Gastrocnemius medialis (tissue), 4 donors: ENCODE measurements at regions of chr9 and their contacts with region 1.

Region 1: DNA sequence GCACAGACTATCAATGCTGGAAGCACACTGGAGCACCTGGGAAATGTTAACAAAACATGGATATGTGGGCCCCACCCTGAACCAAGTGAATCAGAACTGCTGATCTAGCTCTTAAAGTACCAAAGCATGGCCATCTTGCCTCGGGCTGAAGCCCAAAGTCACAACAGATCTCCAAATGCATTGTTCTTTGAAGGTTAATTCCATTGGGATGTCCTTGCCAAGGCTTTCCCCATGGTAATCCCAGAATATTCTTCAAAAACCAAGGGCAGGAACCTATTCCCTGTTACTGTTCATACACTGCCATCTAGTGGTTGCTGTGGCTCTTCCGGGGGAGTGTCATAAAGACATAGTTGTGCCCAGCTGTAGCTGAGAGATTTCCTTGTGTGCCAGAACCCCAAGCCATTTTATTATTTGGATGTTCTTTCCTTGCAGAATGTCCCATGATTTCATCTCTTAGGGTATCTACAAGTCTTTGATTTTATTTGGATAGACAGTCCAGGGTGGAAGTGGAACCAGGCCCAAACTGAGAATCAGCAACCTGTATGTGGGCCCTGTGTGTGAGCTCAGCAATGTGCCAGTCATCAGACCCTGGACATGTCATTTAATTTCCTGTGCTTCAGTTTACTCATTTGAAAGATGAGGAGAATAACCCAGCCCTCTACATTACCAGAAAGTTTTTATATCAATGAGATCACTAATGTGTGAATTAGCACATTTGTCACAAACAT is 290.0 kb downstream of the ACTL7B start:
- DNase-seq: peak in 1 of 2 donors; percentile 42
- ATAC-seq: peak; percentile 87 to 93
- H3K4me3 ChIP-seq: no peak overlapping the region
- H3K27ac ChIP-seq: no peak overlapping the region
- H3K4me1 ChIP-seq: peaks cover 0 to 23% of the 10 kb centered on the region in 2 donors
- H3K27me3 ChIP-seq: no peaks in the 10 kb centered on the region
- CTCF ChIP-seq: peak; percentile 84 to 91 (median 87)
- POLR2A ChIP-seq: no peak

Region 2: DNA sequence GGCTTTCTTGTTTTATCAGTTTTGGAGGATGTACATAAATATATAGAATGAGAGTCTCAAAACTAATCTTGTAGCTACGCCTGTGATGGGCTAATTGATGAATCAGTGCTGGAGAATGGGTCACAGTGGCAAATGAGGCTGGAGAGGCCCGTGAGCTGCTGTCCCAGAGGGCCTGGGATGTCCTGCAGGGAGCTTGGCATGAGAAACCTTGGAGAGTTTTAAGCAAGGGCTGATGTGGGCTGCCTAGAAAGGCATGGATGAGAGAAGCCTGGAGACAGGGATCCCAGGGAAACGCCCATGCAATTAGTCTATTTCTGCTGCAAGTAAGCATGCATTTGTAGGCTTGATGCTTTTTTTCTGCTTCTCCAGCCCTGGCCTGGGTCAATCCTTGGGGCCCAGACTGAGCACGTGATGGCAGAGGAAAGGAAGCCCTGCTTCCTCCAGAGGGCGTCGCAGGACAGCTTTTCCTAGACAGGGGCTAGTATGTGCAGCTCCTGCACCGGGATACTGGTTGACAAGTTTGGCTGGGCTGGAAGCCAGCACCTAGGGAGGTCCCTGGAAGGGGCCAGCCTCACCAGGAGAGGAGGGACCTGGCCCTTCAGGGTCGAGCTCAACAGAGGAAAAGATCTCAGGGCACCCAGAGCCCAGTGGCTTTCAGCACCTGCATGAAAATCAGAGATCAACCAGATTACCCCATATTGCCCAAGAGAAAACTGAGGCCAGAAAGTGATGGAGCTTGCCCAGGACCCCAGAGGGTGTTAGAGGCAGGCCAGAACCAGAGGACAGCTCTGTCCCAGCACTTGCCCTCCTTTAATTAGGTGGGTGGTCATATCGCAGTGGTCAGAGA is 1143.6 kb before region 1 on chr9:
- in situ Hi-C with region 1: no loop called
- intact Hi-C with region 1: loop called (anchors 2 kb)
- DNase-seq: peak in 1 of 2 donors; percentile 54
- ATAC-seq: peak in 1 of 2 donors; percentile 47
- H3K4me3 ChIP-seq: no peak overlapping the region
- H3K27ac ChIP-seq: no peak overlapping the region
- H3K4me1 ChIP-seq: peaks cover 0 to 5% of the 10 kb centered on the region in 2 donors
- H3K27me3 ChIP-seq: no peaks in the 10 kb centered on the region
- CTCF ChIP-seq: peak; percentile 12 to 51 (median 43)
- POLR2A ChIP-seq: no peak

Region 3: GRCh38 chr9:107472581-107473340 is 1093.1 kb before region 1 on chr9:
- in situ Hi-C with region 1: loop called in 3 of 4 experiments (anchors 10 kb)
- intact Hi-C with region 1: no loop called
- DNase-seq: no peak
- ATAC-seq: no peak
- H3K4me3 ChIP-seq: no peak overlapping the region
- H3K27ac ChIP-seq: no peak overlapping the region
- H3K4me1 ChIP-seq: no peaks in the 10 kb centered on the region
- H3K27me3 ChIP-seq: no peaks in the 10 kb centered on the region
- CTCF ChIP-seq: no peak
- POLR2A ChIP-seq: no peak

Region 4: DNA sequence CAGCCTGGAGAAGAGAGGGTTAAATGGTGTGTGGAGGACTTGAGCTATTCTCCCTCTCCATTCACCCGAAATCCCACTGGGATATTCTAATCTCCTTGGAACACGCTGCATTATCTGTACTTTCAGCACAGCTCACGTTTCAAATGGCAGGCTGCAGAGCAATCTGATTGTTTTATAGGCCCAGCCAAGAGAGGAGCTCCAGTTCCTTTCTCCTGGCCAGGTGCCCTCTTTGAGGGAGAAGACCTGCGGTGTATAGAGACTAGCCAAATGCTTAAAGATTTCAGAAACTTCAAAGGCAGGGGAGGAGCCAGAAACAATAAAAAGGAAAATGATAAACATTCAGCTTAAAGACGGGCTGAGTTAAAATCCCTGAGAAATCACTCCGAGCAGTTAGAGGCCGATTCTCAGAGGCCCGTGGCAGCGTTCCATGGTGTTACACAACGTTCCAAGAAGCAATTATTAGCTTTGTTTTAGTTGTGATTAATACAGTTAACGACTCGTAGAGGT is 512.2 kb before region 1 on chr9:
- in situ Hi-C with region 1: no loop called
- intact Hi-C with region 1: loop called (anchors 10 kb)
- DNase-seq: peak; percentile 68 to 73
- ATAC-seq: peak; percentile 72 to 84
- H3K4me3 ChIP-seq: peak overlapping the region; percentile 7 to 48 (median 22)
- H3K27ac ChIP-seq: peak overlapping the region; percentile 43 to 74 (median 63)
- H3K4me1 ChIP-seq: peaks cover 38 to 41% of the 10 kb centered on the region in 2 donors
- H3K27me3 ChIP-seq: no peaks in the 10 kb centered on the region
- CTCF ChIP-seq: no peak
- POLR2A ChIP-seq: no peak

Region 5: DNA sequence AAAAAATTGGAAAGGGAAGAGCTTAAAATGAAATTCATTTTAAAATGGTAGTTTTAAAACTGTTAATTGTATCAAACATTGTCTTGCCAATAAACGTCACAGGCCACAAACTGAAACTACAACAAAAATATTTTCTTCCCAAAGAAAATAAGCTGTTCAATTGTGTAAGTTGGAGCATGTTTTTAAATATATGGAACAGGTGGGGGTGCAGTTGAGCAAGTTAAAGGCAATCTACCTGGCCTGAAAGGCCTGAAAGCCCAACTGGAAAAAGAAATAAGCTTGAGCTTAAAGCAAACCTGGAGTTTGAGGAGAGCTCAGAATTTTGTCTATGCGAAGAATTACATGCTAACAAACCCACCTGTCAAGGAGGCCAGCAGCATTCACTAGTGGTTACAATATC is 149.5 kb before region 1 on chr9:
- in situ Hi-C with region 1: no loop called
- intact Hi-C with region 1: loop called (anchors 2 kb)
- DNase-seq: no peak
- ATAC-seq: no peak
- H3K4me3 ChIP-seq: no peak overlapping the region
- H3K27ac ChIP-seq: no peak overlapping the region
- H3K4me1 ChIP-seq: peaks cover 0 to 5% of the 10 kb centered on the region in 2 donors
- H3K27me3 ChIP-seq: no peaks in the 10 kb centered on the region
- CTCF ChIP-seq: peak in 1 of 5 experiments; percentile 15
- POLR2A ChIP-seq: no peak

Region 6: DNA sequence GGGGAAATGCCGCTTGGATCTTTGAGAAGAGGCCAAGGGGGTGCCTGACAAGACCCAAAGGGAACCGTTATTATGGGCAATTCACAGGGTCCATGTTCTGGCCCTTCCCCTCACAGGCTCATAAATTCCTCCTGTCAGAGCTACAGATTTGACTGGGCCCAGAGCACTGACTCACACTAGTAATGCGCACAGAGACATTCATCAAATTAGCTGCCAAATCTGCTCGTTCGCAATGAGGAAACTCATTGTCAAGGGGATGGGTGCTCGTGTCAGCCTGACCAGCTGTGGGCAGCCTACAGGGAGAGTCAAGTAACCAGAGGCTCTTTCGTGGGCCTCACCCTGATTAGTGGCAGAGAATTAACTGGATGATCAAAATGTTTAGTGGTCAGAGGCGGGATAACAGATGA is 87.4 kb before region 1 on chr9:
- in situ Hi-C with region 1: loop called in 1 of 4 experiments (anchors 25 kb)
- intact Hi-C with region 1: loop called (anchors 2 kb)
- DNase-seq: peak; percentile 60 to 71
- ATAC-seq: peak; percentile 72 to 79
- H3K4me3 ChIP-seq: no peak overlapping the region
- H3K27ac ChIP-seq: peak overlapping the region; percentile 75 to 90 (median 84)
- H3K4me1 ChIP-seq: peaks cover 37 to 60% of the 10 kb centered on the region in 2 donors
- H3K27me3 ChIP-seq: no peaks in the 10 kb centered on the region
- CTCF ChIP-seq: peak in 2 of 5 experiments; percentile 30 to 33
- POLR2A ChIP-seq: no peak